Colonic mucosa (tissue), 4 donors: ENCODE measurements at regions of chr16 and their contacts with region 1.

Region 1: GRCh38 chr16:23423496-23424049 is 29.4 kb downstream of the COG7 start:
- DNase-seq: peak; percentile 90
- H3K4me3 ChIP-seq: no peak overlapping the region
- H3K27ac ChIP-seq: peak overlapping the region; percentile 89
- H3K4me1 ChIP-seq: peaks cover 11% of the 10 kb centered on the region
- H3K27me3 ChIP-seq: no peaks in the 10 kb centered on the region
- CTCF ChIP-seq: no peak

Region 2: DNA sequence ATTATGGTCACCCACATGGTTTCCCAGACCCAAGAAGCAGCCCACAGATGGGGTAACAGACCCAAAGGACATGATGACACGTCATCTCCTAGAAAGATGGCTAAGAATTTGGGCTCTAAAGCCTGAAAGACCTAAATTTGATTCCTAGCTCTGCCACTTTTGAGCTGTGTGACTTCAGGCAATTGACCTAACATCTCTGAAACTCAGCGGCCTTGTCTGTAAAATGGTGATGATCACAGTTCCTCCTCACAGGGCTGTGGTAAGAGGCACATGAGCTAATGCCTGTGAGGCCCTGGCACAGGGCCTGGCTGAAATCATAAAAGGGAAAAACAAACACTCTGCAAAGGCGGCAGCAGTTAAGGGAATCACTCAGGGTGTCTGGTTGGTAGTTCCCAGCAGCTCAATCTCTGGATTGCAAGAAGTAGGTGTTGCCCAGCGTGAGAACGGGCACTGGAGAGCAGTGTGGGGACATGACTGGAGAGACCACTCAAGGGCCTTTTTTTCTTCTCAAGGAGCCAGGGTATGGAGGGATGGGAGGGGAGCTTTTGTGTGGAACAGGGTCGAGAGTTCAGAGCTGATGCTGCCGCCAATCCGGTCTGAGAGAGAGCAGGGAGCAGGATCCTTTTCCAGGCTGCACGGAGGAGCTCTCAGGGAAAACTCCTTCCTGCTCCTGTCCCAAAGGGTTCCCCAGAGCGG is 106.5 kb before region 1 on chr16:
- intact Hi-C with region 1: loop called (anchors 10 kb)
- DNase-seq: peak; percentile 85
- H3K4me3 ChIP-seq: no peak overlapping the region
- H3K27ac ChIP-seq: peak overlapping the region; percentile 70
- H3K4me1 ChIP-seq: peaks cover 3% of the 10 kb centered on the region
- H3K27me3 ChIP-seq: no peaks in the 10 kb centered on the region
- CTCF ChIP-seq: no peak

Region 3: GRCh38 chr16:23615805-23616204 is 192.2 kb after region 1 on chr16:
- intact Hi-C with region 1: no loop called
- DNase-seq: peak; percentile 23
- H3K4me3 ChIP-seq: no peak overlapping the region
- H3K27ac ChIP-seq: peak overlapping the region; percentile 12
- H3K4me1 ChIP-seq: no peaks in the 10 kb centered on the region
- H3K27me3 ChIP-seq: no peaks in the 10 kb centered on the region
- CTCF ChIP-seq: no peak

Region 4: GRCh38 chr16:23640931-23641765 is 217.6 kb after region 1 on chr16 and contains the starts of genes DCTN5 and PALB2:
- intact Hi-C with region 1: no loop called
- DNase-seq: peak; percentile 94
- H3K4me3 ChIP-seq: peak within 1 kb of the TSS; percentile 99
- H3K27ac ChIP-seq: peak within 1 kb of the TSS; percentile 72
- H3K4me1 ChIP-seq: peaks cover 3% of the 10 kb centered on the region
- H3K27me3 ChIP-seq: no peaks in the 10 kb centered on the region
- CTCF ChIP-seq: no peak
- total RNA-seq, gene DCTN5: 61.5 to 62.1 TPM
- total RNA-seq, gene PALB2: 8.2 to 13.3 TPM